ENCODE measurements at regions of chr14 and their contacts with region 1.

Region 1: DNA sequence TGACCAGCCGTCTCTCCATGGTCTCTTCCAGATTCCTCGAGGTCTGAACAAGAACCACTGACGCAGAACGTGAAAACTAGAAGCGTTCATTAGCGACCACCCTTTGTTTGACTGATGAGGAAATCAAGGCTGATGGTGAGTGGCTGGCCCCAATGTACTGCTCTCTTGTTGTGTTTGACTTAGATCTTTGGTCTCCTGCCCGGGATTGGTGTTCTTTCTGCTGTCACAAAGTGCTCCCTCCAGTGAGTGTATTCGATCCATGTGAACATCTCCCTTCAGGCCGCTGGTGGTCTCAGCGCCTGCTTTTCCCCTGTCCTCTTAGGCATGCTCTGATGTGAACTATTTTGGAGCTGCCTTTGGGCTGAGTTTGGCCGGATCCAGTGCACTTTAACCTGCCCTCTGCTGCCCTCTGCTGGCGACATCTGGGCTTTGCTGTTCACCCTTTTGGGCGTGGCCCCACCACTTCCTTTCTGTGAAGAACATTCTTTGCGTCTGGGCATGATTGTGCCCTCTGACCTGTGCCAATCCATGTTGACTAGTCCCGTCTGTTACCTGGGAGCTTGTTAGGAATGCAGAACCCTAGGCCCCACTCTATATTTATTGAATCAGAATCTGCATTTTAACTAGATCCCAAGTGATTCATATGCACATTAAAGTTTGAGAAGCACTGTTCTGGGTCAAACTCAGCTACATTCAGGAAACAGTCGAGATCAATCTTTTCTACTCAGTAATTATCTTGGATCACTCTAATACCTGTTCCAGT is 279.2 kb downstream of the TTC6 start:
- DNase-seq: peak; percentile 76
- H3K4me3 ChIP-seq: no peak overlapping the region
- H3K27ac ChIP-seq: no peak overlapping the region
- H3K4me1 ChIP-seq: peaks cover 5% of the 10 kb centered on the region
- CTCF ChIP-seq: peak; percentile 94

Region 2: GRCh38 chr14:37230551-37231194 is 643.9 kb before region 1 on chr14:
- CTCF ChIA-PET with region 1: no interaction called
- POLR2A ChIA-PET with region 1: no interaction called
- intact Hi-C with region 1: loop called (anchors 5 kb)
- DNase-seq: peak; percentile 75
- H3K4me3 ChIP-seq: no peak overlapping the region
- H3K27ac ChIP-seq: no peak overlapping the region
- H3K4me1 ChIP-seq: no peaks in the 10 kb centered on the region
- CTCF ChIP-seq: peak; percentile 99

Region 3: GRCh38 chr14:37246427-37246914 is 628.1 kb before region 1 on chr14:
- CTCF ChIA-PET with region 1: interaction called, 3 read pairs
- POLR2A ChIA-PET with region 1: no interaction called
- intact Hi-C with region 1: loop called (anchors 1 kb)
- DNase-seq: peak; percentile 50
- H3K4me3 ChIP-seq: no peak overlapping the region
- H3K27ac ChIP-seq: no peak overlapping the region
- H3K4me1 ChIP-seq: no peaks in the 10 kb centered on the region
- CTCF ChIP-seq: peak; percentile 92

Region 4: GRCh38 chr14:37709419-37710195 is 165.0 kb before region 1 on chr14:
- CTCF ChIA-PET with region 1: no interaction called
- POLR2A ChIA-PET with region 1: no interaction called
- intact Hi-C with region 1: loop called (anchors 10 kb)
- DNase-seq: peak; percentile 1
- H3K4me3 ChIP-seq: no peak overlapping the region
- H3K27ac ChIP-seq: no peak overlapping the region
- H3K4me1 ChIP-seq: no peaks in the 10 kb centered on the region
- CTCF ChIP-seq: peak; percentile 59

Measured in OCI-LY7 (cell line).